IMR-90 (cell line): ENCODE measurements at regions of chr11 and their contacts with region 1.

Region 1: GRCh38 chr11:7422544-7423331 is 62.6 kb upstream of the OLFML1 start:
- DNase-seq: no peak
- ATAC-seq: no peak
- H3K4me3 ChIP-seq: no peak overlapping the region
- H3K27ac ChIP-seq: no peak overlapping the region
- H3K4me1 ChIP-seq: no peaks in the 10 kb centered on the region
- H3K27me3 ChIP-seq: no peaks in the 10 kb centered on the region
- CTCF ChIP-seq: no peak
- POLR2A ChIP-seq: no peak
- RAD21 ChIP-seq: no peak

Region 2: DNA sequence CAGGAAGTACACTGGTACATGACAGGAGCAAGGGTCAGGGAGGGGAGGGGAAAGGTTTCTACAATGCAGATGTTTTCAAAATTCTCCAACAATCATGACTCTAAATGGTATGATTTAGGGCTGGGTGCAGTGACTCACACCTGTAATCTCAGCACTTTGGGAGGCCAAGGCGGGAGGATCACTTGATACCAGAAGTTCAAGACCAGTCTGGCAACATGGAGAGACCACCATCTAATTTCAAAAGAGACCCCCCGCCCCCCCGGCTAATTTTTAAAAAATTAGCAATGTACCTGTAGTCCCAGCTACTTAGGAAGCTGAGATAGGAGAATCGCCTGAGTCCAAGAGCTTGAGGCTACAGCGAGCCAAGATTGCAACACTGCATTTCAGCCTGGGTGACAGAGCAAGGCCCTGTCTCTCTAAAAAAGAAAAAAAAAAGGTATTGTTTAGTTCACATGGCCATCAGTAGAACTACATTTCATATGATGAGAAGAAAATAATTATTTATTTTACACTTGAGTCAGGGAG is 46.7 kb after region 1 on chr11:
- CTCF ChIA-PET with region 1: no interaction called
- POLR2A ChIA-PET with region 1: interaction called, 12 read pairs
- dilution Hi-C with region 1: no loop called
- in situ Hi-C with region 1: no loop called
- intact Hi-C with region 1: no loop called
- DNase-seq: no peak
- ATAC-seq: no peak
- H3K4me3 ChIP-seq: no peak overlapping the region
- H3K27ac ChIP-seq: no peak overlapping the region
- H3K4me1 ChIP-seq: no peaks in the 10 kb centered on the region
- H3K27me3 ChIP-seq: no peaks in the 10 kb centered on the region
- CTCF ChIP-seq: no peak
- POLR2A ChIP-seq: no peak
- RAD21 ChIP-seq: no peak